ENCODE measurements at regions of chr20 and their contacts with region 1.

Region 1: DNA sequence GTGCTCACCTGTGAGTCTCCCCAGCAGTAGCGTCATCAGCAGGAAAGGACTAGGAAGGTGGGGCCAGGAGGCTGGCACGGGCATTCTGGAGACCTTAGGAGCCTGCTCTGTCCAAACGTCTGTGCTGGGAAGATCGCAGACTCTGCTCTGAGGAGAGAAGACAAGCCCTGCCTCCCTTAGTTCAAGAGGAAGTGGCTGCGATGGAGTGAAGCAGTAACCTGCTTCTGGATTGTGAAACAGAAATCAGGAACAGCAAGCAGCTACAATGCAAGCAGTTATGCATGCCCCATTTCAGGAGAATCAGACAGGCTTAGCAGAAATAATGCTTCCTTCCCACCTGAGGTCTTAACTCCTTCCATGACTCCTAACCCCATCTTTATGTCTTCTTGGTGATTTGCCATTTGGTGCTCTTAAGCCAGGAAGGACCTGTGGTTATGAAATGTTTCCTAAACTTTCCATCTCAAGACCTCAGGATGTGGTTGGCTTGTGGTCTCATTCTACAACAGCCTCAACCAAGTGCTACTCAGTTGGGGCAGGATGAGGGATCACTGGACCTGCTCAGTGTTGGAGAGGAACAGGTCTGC is at the start of gene SIRPB1:
- DNase-seq: no peak
- ATAC-seq: no peak
- H3K4me3 ChIP-seq: no peak within 1 kb of the TSS
- H3K27ac ChIP-seq: no peak within 1 kb of the TSS
- H3K4me1 ChIP-seq: no peaks in the 10 kb centered on the region
- H3K27me3 ChIP-seq: no peaks in the 10 kb centered on the region
- CTCF ChIP-seq: no peak
- POLR2A ChIP-seq: no peak
- total RNA-seq, gene SIRPB1: 0.20 to 4.4 (median 1.8) TPM in 3 of 4 donors, not detected in the other

Region 2: DNA sequence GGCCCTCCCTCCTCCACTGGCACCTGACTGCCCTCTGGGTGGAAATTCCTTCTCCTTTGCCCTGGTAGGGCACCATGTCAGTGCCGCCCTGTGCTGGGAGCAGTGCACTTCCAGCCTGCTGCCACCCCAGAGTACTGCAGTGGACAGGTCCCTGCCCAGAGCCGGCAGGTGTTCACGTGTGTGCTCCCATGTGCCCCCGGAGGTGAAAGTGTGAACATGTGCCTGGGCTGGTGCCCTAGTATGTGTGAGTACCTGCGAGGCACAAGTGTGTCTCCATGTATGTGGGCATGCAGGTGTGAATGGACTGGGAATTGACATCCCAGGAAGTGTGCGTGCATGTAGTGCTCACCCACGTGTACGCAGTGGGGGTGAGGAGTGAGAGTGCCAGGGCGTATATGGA is 320.4 kb before region 1 on chr20:
- in situ Hi-C with region 1: no loop called
- intact Hi-C with region 1: no loop called
- DNase-seq: no peak
- ATAC-seq: no peak
- H3K4me3 ChIP-seq: no peak overlapping the region
- H3K27ac ChIP-seq: no peak overlapping the region
- H3K4me1 ChIP-seq: no peaks in the 10 kb centered on the region
- H3K27me3 ChIP-seq: no peaks in the 10 kb centered on the region
- CTCF ChIP-seq: no peak
- POLR2A ChIP-seq: no peak

Region 3: GRCh38 chr20:1491281-1491840 is 128.6 kb before region 1 on chr20 and contains the start of gene SIRPB2:
- in situ Hi-C with region 1: no loop called
- intact Hi-C with region 1: no loop called
- DNase-seq: peak; percentile 18 to 41
- ATAC-seq: peak in 1 of 2 donors; percentile 41
- H3K4me3 ChIP-seq: peak within 1 kb of the TSS in 1 of 4 donors; percentile 31
- H3K27ac ChIP-seq: peak within 1 kb of the TSS in 1 of 4 donors; percentile 28
- H3K4me1 ChIP-seq: no peaks in the 10 kb centered on the region
- H3K27me3 ChIP-seq: no peaks in the 10 kb centered on the region
- CTCF ChIP-seq: no peak
- POLR2A ChIP-seq: no peak
- total RNA-seq, gene SIRPB2: 0.94 to 6.2 (median 1.5) TPM

Region 4: GRCh38 chr20:1567392-1568162 is 52.4 kb before region 1 on chr20:
- in situ Hi-C with region 1: loop called in 1 of 4 experiments (anchors 10 kb)
- intact Hi-C with region 1: no loop called
- DNase-seq: no peak
- ATAC-seq: no peak
- H3K4me3 ChIP-seq: no peak overlapping the region
- H3K27ac ChIP-seq: no peak overlapping the region
- H3K4me1 ChIP-seq: no peaks in the 10 kb centered on the region
- H3K27me3 ChIP-seq: no peaks in the 10 kb centered on the region
- CTCF ChIP-seq: no peak
- POLR2A ChIP-seq: no peak

Region 5: DNA sequence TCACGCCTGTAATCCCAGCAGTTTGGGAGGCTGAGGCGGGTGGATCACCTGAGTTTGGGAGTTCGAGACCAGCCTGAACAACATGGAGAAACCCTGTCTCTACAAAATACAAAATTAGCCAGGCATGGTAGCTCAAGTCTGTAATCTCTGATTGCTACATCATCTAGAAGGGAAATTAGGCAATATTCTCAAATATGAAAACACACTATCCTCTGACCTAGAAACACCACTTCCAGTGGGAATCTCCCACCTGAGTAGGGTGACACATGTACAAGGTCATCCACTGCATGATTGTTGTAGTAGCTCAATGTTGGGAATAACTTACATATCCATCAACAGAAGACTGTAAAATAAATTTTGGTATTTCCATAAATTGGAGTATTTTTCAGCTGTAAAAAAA is 43.3 kb before region 1 on chr20:
- in situ Hi-C with region 1: loop called in 1 of 4 experiments (anchors 5 kb)
- intact Hi-C with region 1: loop called (anchors 2 kb)
- DNase-seq: no peak
- ATAC-seq: no peak
- H3K4me3 ChIP-seq: no peak overlapping the region
- H3K27ac ChIP-seq: no peak overlapping the region
- H3K4me1 ChIP-seq: no peaks in the 10 kb centered on the region
- H3K27me3 ChIP-seq: no peaks in the 10 kb centered on the region
- CTCF ChIP-seq: no peak
- POLR2A ChIP-seq: no peak